Gastrocnemius medialis (tissue), 4 donors: ENCODE measurements at regions of chr15 and their contacts with region 1.

Region 1: DNA sequence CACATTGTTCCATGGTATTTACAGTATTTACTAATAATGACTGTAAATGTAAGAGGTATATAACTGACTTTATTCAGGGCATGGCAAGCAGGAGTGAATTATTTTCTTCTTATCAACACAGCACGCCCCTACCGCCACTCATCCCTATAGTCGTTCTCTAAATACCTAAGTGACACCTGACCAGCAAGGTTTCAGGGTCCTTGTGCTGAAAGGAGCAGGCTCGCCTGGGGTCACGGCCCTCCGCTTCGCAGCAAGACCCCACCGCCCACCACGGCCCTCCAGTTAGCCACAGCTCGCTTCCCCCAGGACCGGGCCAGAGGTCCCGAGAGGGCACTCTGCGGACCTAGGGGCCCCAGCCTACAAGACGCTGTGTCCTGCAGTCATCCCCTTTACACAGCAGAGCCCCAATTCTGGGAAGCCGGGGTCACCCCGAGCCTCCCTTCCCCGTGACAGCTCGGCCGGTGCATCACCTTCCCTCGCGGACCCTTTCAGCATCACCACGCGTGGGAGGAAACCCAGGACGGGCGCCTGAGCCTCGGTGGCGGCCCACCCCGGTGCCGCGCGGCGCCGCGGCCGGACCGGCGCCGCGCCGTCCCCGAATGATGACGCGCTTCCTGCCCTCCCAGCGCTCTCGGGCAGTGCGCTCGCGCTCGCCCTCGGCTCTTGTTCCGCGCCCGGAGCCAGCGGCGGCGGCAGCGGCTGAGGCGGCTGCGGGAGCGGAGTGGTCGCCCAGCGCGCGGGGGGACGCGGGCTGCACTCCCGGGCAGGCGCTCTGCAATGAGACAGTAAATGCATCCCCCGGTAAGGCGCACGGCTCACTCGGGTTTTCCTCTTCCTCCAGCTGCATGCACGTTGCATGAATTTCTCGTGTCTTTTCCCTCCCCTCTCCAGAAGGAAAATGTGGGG is 225.1 kb upstream of the C2CD4B start:
- DNase-seq: peak; percentile 37 to 59
- ATAC-seq: peak; percentile 72 to 77
- H3K4me3 ChIP-seq: peak within 1 kb of the TSS; percentile 81 to 99 (median 92)
- H3K27ac ChIP-seq: peak within 1 kb of the TSS; percentile 84 to 93 (median 90)
- H3K4me1 ChIP-seq: peaks cover 19 to 23% of the 10 kb centered on the region in 2 donors
- H3K27me3 ChIP-seq: no peaks in the 10 kb centered on the region
- CTCF ChIP-seq: peak in 1 of 5 experiments; percentile 15
- POLR2A ChIP-seq: peak; percentile 90 to 93

Region 2: GRCh38 chr15:62432702-62433398 is 42.7 kb after region 1 on chr15:
- in situ Hi-C with region 1: no loop called
- intact Hi-C with region 1: loop called (anchors 2 kb)
- DNase-seq: peak; percentile 83 to 85
- ATAC-seq: peak; percentile 93 to 96
- H3K4me3 ChIP-seq: no peak overlapping the region
- H3K27ac ChIP-seq: peak overlapping the region; percentile 81 to 91 (median 84)
- H3K4me1 ChIP-seq: peaks cover 22 to 49% of the 10 kb centered on the region in 2 donors
- H3K27me3 ChIP-seq: no peaks in the 10 kb centered on the region
- CTCF ChIP-seq: no peak
- POLR2A ChIP-seq: no peak

Region 3: DNA sequence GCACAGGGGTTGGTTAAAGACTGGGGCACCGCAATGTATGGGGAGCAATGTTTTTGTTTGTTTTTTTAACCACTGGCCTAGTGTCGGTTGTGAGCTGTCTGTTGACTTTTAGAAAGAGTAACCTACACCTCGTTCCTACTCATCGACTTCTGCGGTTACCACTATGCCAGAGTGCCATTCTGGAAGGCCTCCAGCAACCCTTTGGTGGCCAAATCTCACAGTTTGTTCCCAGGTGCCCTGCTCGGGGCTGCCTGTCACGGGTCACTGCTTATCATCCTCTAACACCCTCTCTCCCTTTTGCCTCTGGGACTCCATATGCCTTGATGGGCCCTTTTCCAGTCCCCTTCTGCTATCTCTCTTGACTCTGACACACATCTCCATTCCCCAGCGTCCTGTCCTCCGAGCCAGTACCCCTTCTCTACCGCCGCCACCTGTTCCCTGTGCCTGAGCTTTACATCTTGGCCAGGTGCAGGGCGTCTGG is 65.3 kb after region 1 on chr15:
- in situ Hi-C with region 1: no loop called
- intact Hi-C with region 1: loop called (anchors 5 kb)
- DNase-seq: peak; percentile 58 to 68
- ATAC-seq: peak; percentile 40 to 75
- H3K4me3 ChIP-seq: peak overlapping the region in 3 of 4 donors; percentile 1 to 37 (median 27)
- H3K27ac ChIP-seq: peak overlapping the region; percentile 84 to 90 (median 88)
- H3K4me1 ChIP-seq: peaks cover 57 to 61% of the 10 kb centered on the region in 2 donors
- H3K27me3 ChIP-seq: no peaks in the 10 kb centered on the region
- CTCF ChIP-seq: no peak
- POLR2A ChIP-seq: no peak

Region 4: DNA sequence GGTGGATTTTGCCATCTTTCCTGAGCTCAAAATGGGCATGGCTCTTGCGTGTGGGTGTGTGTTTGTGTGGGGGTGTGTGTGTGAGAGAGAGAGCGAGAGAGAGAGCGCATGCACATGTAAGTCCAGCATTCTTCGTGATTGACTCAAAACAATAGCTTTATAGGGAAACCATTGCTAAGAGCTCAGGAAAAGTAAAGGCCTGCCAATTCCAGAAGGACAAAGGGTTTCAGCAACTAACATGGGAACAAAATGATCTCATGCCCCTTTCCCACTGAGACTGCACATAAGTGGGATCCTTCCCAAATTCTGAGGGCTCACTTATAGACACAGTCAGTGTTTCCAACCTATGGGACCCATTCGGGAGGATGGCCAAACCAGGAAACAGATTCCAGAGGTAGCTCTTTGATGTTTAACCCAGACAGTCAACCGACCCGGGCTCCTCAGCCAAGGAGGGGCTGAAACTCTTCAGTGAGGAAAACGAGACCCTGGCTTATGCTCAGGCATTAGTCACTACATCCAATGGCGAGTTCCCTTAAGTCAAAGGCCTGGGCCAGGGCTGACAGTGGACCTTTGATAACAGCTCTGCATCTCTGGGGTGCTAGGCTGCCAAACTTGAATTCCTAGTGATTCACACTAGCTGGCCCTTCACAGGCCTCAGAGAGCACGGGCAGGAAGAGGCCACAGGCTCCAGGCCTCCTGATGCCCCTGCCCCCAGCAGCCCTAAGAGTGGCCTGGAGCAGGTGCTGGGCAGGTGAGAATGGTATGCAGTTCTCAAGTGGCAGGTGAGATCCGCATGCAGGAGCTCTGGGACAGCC is 79.9 kb after region 1 on chr15:
- in situ Hi-C with region 1: no loop called
- intact Hi-C with region 1: loop called (anchors 1 kb)
- DNase-seq: peak in 1 of 2 donors; percentile 66
- ATAC-seq: peak in 1 of 2 donors; percentile 10
- H3K4me3 ChIP-seq: no peak overlapping the region
- H3K27ac ChIP-seq: peak overlapping the region; percentile 56 to 92 (median 65)
- H3K4me1 ChIP-seq: peaks cover 71 to 77% of the 10 kb centered on the region in 2 donors
- H3K27me3 ChIP-seq: no peaks in the 10 kb centered on the region
- CTCF ChIP-seq: no peak
- POLR2A ChIP-seq: no peak

Region 5: GRCh38 chr15:62549345-62549970 is 159.3 kb after region 1 on chr15:
- in situ Hi-C with region 1: no loop called
- intact Hi-C with region 1: loop called (anchors 1 kb)
- DNase-seq: no peak
- ATAC-seq: no peak
- H3K4me3 ChIP-seq: no peak overlapping the region
- H3K27ac ChIP-seq: no peak overlapping the region
- H3K4me1 ChIP-seq: peaks cover 34 to 51% of the 10 kb centered on the region in 2 donors
- H3K27me3 ChIP-seq: no peaks in the 10 kb centered on the region
- CTCF ChIP-seq: peak in 4 of 5 experiments; percentile 33 to 50 (median 39)
- POLR2A ChIP-seq: no peak

Region 6: DNA sequence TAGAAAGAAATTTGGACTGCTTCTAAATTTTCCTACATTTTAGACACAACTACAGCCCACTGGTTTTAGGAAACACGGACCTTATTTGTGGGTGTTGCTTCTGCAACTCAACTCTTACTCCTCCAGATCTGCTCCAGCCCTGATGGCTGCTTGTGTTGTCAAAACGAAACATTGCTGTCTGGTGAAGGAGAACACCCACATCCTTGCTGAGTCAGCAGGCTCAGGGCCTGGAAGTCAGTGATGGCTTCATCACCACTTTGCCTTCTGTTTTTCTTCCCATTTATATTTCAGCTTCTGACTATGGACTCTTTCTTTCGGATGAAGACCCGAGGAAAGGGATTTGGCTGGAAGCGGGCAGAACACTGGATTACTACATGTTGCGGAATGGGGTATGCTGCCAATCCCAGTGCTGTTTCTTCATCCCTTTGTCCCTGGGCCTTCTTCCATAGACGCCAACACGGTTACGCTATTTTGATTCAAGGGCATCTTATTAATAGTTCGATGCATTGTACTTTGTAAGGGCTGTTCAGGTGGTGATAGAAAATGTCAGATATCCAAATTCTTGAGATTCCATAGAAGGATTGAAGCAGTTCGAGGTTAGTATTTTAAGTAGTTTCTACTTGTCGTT is 259.8 kb after region 1 on chr15:
- in situ Hi-C with region 1: loop called in 2 of 4 experiments (anchors 10 to 25 kb)
- intact Hi-C with region 1: loop called (anchors 1 kb)
- DNase-seq: peak in 1 of 2 donors; percentile 52
- ATAC-seq: peak in 1 of 2 donors; percentile 65
- H3K4me3 ChIP-seq: no peak overlapping the region
- H3K27ac ChIP-seq: peak overlapping the region; percentile 19 to 69 (median 51)
- H3K4me1 ChIP-seq: peaks cover 19 to 39% of the 10 kb centered on the region in 2 donors
- H3K27me3 ChIP-seq: no peaks in the 10 kb centered on the region
- CTCF ChIP-seq: no peak
- POLR2A ChIP-seq: no peak

Region 7: GRCh38 chr15:62742409-62743171 is 352.5 kb after region 1 on chr15:
- in situ Hi-C with region 1: no loop called
- intact Hi-C with region 1: loop called (anchors 1 kb)
- DNase-seq: peak; percentile 32 to 63
- ATAC-seq: peak; percentile 73 to 83
- H3K4me3 ChIP-seq: no peak overlapping the region
- H3K27ac ChIP-seq: peak overlapping the region in 3 of 4 donors; percentile 8 to 54 (median 44)
- H3K4me1 ChIP-seq: peaks cover 0 to 7% of the 10 kb centered on the region in 2 donors
- H3K27me3 ChIP-seq: no peaks in the 10 kb centered on the region
- CTCF ChIP-seq: peak; percentile 43 to 84 (median 69)
- POLR2A ChIP-seq: no peak